ENCODE measurements at regions of chr1 and their contacts with region 1.

Region 1: DNA sequence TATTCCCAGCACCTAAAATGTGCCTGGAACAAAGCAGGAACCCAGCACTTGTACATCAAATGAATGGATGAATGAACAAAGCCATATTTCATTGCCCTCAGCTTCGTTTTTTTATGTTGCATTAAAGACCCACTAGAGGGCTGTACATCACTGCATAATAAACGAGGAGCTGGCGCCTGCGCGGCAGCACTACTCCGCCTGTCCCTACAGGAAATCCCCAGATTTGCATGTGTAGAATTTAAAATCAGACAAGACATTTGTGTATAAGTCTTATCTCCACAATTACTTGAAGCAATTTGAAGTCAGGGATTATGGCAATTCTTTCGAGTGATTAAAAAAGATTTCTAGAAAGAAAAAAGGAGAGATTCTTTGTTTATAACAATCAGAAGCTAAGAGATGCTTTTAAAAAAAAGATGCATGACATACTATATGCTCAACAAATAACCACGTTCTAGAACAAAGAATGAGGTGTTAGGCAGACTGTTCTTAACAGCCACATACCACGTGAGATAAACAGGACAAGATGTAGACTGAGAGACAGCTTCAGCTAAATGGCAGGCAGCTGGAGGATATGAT is 5.4 kb upstream of the NEK2 start:
- DNase-seq: no peak
- H3K4me3 ChIP-seq: no peak overlapping the region
- H3K27ac ChIP-seq: no peak overlapping the region
- H3K4me1 ChIP-seq: peaks cover 2 to 8% (median 3%) of the 10 kb centered on the region in 4 donors
- H3K27me3 ChIP-seq: peaks cover 0 to 4% (median 0%) of the 10 kb centered on the region in 4 donors
- CTCF ChIP-seq: peak; percentile 64 to 75 (median 71)
- EP300 ChIP-seq: no peak
- POLR2A ChIP-seq: no peak

Region 2: GRCh38 chr1:211210052-211210451 is 470.8 kb before region 1 on chr1:
- intact Hi-C with region 1: no loop called
- DNase-seq: no peak
- H3K4me3 ChIP-seq: no peak overlapping the region
- H3K27ac ChIP-seq: no peak overlapping the region
- H3K4me1 ChIP-seq: no peaks in the 10 kb centered on the region
- H3K27me3 ChIP-seq: no peaks in the 10 kb centered on the region
- CTCF ChIP-seq: no peak
- EP300 ChIP-seq: no peak
- POLR2A ChIP-seq: no peak

Region 3: DNA sequence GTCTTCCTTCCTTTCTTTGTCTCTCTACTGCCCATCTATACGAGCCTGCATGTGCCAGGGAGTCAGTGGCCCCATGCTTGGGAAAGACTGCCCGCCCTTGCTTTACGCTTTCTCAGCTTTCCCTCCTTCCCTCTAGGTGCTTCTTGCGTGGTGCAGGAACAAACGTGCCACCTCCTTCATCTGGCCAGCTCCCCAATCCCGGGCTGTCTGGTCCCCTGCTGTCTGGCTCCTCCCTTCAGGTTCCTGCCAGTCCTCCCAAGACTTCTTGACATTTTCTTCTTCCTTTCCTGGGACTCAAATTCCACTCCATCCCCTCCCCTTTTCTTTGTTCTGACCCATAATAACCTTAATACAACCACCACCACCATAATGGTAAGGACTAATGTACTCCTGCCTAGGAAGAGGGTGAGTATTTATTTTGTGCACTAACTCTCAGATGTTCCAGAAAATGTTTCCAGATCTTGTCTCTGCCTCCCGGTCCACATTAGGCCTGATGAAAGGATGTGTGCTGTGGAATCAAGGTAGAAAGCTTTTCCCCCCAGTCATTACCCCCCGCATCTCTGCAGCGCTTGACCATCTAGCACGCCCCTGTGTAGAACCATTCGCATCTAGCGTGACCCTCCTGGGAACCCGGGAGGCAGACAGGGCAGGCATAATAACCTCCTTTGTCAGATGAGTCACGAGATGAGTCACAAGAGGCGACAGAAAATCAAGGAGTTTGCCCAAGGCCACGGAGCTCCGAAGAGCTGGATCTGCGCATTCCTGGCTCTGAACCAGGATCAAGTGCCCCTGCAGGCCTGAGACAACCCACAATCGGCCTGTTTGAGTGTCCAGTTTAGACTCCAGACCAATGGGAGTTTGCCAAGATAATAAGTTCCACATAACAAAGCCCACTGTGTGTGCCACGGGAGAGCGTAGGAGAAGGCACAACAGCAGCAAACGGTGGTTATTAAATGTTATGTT is 54.6 kb after region 1 on chr1:
- intact Hi-C with region 1: no loop called
- DNase-seq: no peak
- H3K4me3 ChIP-seq: no peak overlapping the region
- H3K27ac ChIP-seq: peak overlapping the region in 1 of 4 donors; percentile 14
- H3K4me1 ChIP-seq: peaks cover 0 to 5% (median 0%) of the 10 kb centered on the region in 4 donors
- H3K27me3 ChIP-seq: peaks cover 0 to 8% (median 0%) of the 10 kb centered on the region in 4 donors
- CTCF ChIP-seq: no peak
- EP300 ChIP-seq: no peak
- POLR2A ChIP-seq: no peak

Region 4: GRCh38 chr1:211811848-211812247 is 131.0 kb after region 1 on chr1:
- intact Hi-C with region 1: no loop called
- DNase-seq: no peak
- H3K4me3 ChIP-seq: no peak overlapping the region
- H3K27ac ChIP-seq: no peak overlapping the region
- H3K4me1 ChIP-seq: peaks cover 6 to 24% (median 16%) of the 10 kb centered on the region in 4 donors
- H3K27me3 ChIP-seq: no peaks in the 10 kb centered on the region
- CTCF ChIP-seq: no peak
- EP300 ChIP-seq: no peak
- POLR2A ChIP-seq: no peak

Region 5: DNA sequence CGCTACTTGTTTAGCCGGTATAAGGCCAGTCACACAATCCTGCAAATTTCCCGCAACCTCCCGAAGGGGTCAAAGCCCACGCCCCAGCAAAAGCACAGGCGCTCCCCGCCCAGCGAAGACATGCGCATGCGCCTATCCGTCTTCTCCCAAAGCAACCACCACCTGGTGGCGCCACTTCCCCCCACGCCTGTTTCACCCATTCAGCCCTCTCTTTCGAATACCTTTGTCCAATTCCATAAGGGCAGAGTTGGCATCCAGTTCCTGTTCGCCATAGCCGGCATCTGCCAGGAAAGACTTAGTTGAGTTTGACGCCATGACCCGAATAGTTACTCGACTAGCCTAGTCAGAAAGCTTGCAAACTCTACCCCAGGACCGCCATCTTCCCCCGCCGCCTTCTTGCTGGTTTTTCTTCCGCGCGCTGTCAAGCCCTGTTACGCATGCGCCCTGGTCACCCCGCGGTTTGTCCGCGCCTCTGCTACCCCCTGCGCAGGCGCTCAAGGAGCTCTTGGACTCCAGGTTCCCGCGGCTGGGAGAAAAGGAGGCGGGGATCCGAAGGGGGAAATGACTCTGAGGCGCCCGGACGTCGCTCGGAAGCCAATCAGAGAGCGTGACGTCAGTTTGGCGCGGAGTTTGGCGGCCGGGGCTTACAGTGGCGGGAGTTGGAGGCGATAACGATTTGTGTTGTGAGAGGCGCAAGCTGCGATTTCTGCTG is 354.4 kb after region 1 on chr1 and contains the starts of genes DTL and INTS7:
- intact Hi-C with region 1: loop called (anchors 10 kb)
- DNase-seq: peak; percentile 99
- H3K4me3 ChIP-seq: peak within 1 kb of the TSS; percentile 61 to 78 (median 68)
- H3K27ac ChIP-seq: peak within 1 kb of the TSS; percentile 84 to 88 (median 86)
- H3K4me1 ChIP-seq: peaks cover 18 to 42% (median 30%) of the 10 kb centered on the region in 4 donors
- H3K27me3 ChIP-seq: no peaks in the 10 kb centered on the region
- CTCF ChIP-seq: peak; percentile 87 to 93 (median 89)
- EP300 ChIP-seq: no peak
- POLR2A ChIP-seq: no peak
- total RNA-seq, gene DTL: 0.06 to 0.17 (median 0.17) TPM in 3 of 4 donors, not detected in the other
- total RNA-seq, gene INTS7: 6.0 to 15.4 (median 11.0) TPM